ENCODE measurements at regions of chr17 and their contacts with region 1.

Region 1: DNA sequence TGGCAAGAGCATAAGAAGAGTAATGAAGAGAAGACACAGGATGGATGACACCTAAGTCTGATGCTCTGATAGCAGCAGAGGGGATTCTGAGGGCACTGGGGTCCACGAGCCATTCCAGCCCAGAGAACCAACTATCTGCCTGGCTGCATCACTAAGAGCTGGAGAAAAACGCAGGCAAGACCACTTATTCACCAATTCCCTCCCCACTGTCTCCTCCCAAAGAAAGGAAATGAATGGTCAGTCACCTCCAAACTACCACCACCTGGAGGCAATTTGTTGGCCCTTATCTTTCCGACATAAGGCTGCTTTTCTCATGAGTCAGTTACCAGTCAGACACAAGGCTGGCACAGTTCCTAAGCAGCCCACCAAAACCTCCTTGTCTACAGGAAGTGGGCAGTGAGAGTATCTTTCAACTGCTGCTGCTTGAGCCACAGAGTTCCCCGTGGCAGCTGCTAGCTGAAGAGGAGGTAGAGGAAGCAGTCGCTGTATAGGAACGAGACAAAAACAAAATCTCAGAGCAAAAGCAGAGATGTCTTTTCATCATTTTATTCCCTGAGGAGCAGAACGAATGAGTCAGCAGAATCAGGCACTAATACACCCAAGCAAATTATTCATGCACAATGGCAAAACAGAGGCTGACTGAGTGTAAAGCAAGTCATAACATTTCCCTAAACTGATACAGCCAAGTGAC is 111.1 kb downstream of the SMG6 start:
- DNase-seq: peak; percentile 24 to 89 (median 74)
- ATAC-seq: peak; percentile 90
- H3K4me3 ChIP-seq: no peak overlapping the region
- H3K4me3 Mint-ChIP-seq: peak overlapping the region; percentile 62
- H3K27ac ChIP-seq: peak overlapping the region in 1 of 2 experiments; percentile 33
- H3K27ac Mint-ChIP-seq: peak overlapping the region; percentile 87
- H3K4me1 ChIP-seq: peaks cover 48% of the 10 kb centered on the region
- H3K4me1 Mint-ChIP-seq: peaks cover 63% of the 10 kb centered on the region
- H3K27me3 ChIP-seq: no peaks in the 10 kb centered on the region
- H3K27me3 Mint-ChIP-seq: no peaks in the 10 kb centered on the region
- CTCF ChIP-seq: no peak

Region 2: DNA sequence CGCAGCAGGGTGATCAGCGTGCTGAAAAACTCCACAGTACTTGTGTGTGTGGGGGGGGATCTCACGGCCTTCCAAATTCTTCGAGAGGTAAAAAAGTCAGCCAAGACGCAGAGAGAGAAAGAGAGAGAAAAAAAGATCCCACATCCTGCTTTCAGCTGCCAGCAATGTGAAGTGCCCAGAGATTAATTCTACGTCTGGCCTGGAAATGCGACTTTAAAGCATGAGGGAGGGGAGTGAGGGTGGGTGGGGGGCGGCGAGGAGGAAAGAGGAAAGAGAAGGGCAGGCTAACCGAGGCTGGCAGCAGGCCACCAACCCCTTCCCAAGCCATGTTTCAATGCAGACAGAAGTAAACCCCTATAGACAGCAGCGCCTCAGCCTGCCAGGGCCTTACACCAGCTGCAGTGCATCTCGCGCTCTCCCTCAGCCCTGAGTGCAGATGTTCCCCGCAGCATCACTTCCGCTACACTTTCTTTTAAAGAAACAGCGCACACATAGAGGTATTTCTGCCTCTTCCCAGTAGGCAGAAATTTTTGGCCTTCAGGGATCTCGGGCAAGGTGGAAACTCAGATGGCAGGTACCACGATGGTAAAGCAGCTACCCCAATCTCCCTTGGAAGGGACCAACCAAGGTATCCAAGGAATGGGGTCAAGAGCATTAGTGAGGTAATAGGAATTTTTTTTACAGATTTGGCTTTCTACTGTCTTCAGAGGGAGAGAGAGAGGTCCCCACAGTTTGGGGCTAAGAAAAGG is 23.3 kb after region 1 on chr17:
- CTCF ChIA-PET with region 1: no interaction called
- POLR2A ChIA-PET with region 1: interaction called, 4 read pairs
- intact Hi-C with region 1: loop called (anchors 1 to 2 kb)
- DNase-seq: peak; percentile 44 to 90 (median 75)
- ATAC-seq: peak; percentile 94
- H3K4me3 ChIP-seq: peak overlapping the region; percentile 30 to 42
- H3K4me3 Mint-ChIP-seq: peak overlapping the region; percentile 69
- H3K27ac ChIP-seq: peak overlapping the region; percentile 71 to 89
- H3K27ac Mint-ChIP-seq: peak overlapping the region; percentile 94
- H3K4me1 ChIP-seq: peaks cover 50% of the 10 kb centered on the region
- H3K4me1 Mint-ChIP-seq: peaks cover 61% of the 10 kb centered on the region
- H3K27me3 ChIP-seq: no peaks in the 10 kb centered on the region
- H3K27me3 Mint-ChIP-seq: no peaks in the 10 kb centered on the region
- CTCF ChIP-seq: no peak

Region 3: GRCh38 chr17:2222901-2223616 is 30.5 kb after region 1 on chr17:
- CTCF ChIA-PET with region 1: interaction called, 3 read pairs
- POLR2A ChIA-PET with region 1: interaction called, 3 read pairs
- intact Hi-C with region 1: loop called in 1 of 2 experiments (anchors 2 kb)
- DNase-seq: peak; percentile 27 to 94 (median 64)
- ATAC-seq: peak; percentile 89
- H3K4me3 ChIP-seq: peak overlapping the region in 1 of 2 experiments; percentile 3
- H3K4me3 Mint-ChIP-seq: peak overlapping the region; percentile 16
- H3K27ac ChIP-seq: peak overlapping the region in 1 of 2 experiments; percentile 71
- H3K27ac Mint-ChIP-seq: peak overlapping the region; percentile 84
- H3K4me1 ChIP-seq: peaks cover 12% of the 10 kb centered on the region
- H3K4me1 Mint-ChIP-seq: peaks cover 44% of the 10 kb centered on the region
- H3K27me3 ChIP-seq: no peaks in the 10 kb centered on the region
- H3K27me3 Mint-ChIP-seq: no peaks in the 10 kb centered on the region
- CTCF ChIP-seq: no peak